CD8-positive, alpha-beta T cell (primary cell): ENCODE measurements at regions of chr14 and their contacts with region 1.

Region 1: DNA sequence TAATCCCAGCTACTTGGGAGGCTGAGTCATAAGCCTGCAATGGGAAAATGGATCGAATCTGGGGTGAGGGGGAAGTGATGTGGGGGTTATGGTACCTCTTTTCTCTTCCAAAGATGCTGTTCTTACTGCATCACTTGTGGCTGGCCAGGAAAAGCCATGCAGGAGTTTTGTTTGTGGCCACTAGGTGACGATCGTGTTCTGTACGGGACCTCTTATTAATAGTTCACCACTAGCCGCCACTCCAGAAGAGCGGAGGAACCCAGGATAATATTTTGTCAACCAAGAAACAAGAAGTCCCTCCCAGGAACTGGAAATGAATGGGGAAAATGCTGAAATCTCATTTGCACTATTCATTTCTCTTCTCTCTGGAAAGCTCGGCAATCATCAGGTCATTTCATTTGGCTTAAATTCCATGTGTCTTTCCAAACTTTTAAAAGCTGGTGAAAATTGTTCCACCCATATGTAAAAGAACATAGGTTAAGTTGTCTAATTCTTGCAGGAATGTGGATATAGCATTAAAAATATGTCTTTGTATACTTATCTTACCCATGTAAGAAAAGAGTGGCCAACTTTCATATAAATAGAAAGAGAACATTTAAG is 8.9 kb downstream of the GPR65 start:
- DNase-seq: peak in 6 of 9 experiments; percentile 35 to 72 (median 50)
- ATAC-seq: peak; percentile 78
- H3K4me3 ChIP-seq: no peak overlapping the region
- H3K4me3 Mint-ChIP-seq: peak overlapping the region; percentile 6
- H3K27ac ChIP-seq: no peak overlapping the region
- H3K27ac Mint-ChIP-seq: peak overlapping the region; percentile 80
- H3K4me1 ChIP-seq: peaks cover 50% of the 10 kb centered on the region
- H3K4me1 Mint-ChIP-seq: peaks cover 81% of the 10 kb centered on the region
- H3K27me3 ChIP-seq: no peaks in the 10 kb centered on the region
- H3K27me3 Mint-ChIP-seq: no peaks in the 10 kb centered on the region
- CTCF ChIP-seq: peak; percentile 51

Region 2: GRCh38 chr14:86216323-86216722 is 1797.5 kb before region 1 on chr14:
- CTCF ChIA-PET with region 1: no interaction called
- POLR2A ChIA-PET with region 1: no interaction called
- intact Hi-C with region 1: no loop called
- DNase-seq: no peak
- ATAC-seq: no peak
- H3K4me3 ChIP-seq: no peak overlapping the region
- H3K4me3 Mint-ChIP-seq: no peak overlapping the region
- H3K27ac ChIP-seq: no peak overlapping the region
- H3K27ac Mint-ChIP-seq: no peak overlapping the region
- H3K4me1 ChIP-seq: no peaks in the 10 kb centered on the region
- H3K4me1 Mint-ChIP-seq: no peaks in the 10 kb centered on the region
- H3K27me3 ChIP-seq: no peaks in the 10 kb centered on the region
- H3K27me3 Mint-ChIP-seq: no peaks in the 10 kb centered on the region
- CTCF ChIP-seq: no peak

Region 3: GRCh38 chr14:87952307-87953094 is 61.3 kb before region 1 on chr14:
- CTCF ChIA-PET with region 1: interaction called, 21 read pairs
- POLR2A ChIA-PET with region 1: no interaction called
- intact Hi-C with region 1: loop called in 1 of 2 experiments (anchors 5 kb)
- DNase-seq: peak in 2 of 9 experiments; percentile 40 to 63
- ATAC-seq: peak; percentile 54
- H3K4me3 ChIP-seq: peak overlapping the region in 1 of 2 experiments; percentile 9
- H3K4me3 Mint-ChIP-seq: peak overlapping the region; percentile 69
- H3K27ac ChIP-seq: peak overlapping the region; percentile 49 to 73
- H3K27ac Mint-ChIP-seq: peak overlapping the region; percentile 91
- H3K4me1 ChIP-seq: peaks cover 30% of the 10 kb centered on the region
- H3K4me1 Mint-ChIP-seq: peaks cover 54% of the 10 kb centered on the region
- H3K27me3 ChIP-seq: no peaks in the 10 kb centered on the region
- H3K27me3 Mint-ChIP-seq: no peaks in the 10 kb centered on the region
- CTCF ChIP-seq: no peak

Region 4: GRCh38 chr14:87979689-87980088 is 34.2 kb before region 1 on chr14:
- CTCF ChIA-PET with region 1: no interaction called
- POLR2A ChIA-PET with region 1: no interaction called
- intact Hi-C with region 1: no loop called
- DNase-seq: no peak
- ATAC-seq: no peak
- H3K4me3 ChIP-seq: no peak overlapping the region
- H3K4me3 Mint-ChIP-seq: no peak overlapping the region
- H3K27ac ChIP-seq: no peak overlapping the region
- H3K27ac Mint-ChIP-seq: no peak overlapping the region
- H3K4me1 ChIP-seq: no peaks in the 10 kb centered on the region
- H3K4me1 Mint-ChIP-seq: peaks cover 5% of the 10 kb centered on the region
- H3K27me3 ChIP-seq: no peaks in the 10 kb centered on the region
- H3K27me3 Mint-ChIP-seq: no peaks in the 10 kb centered on the region
- CTCF ChIP-seq: no peak

Region 5: DNA sequence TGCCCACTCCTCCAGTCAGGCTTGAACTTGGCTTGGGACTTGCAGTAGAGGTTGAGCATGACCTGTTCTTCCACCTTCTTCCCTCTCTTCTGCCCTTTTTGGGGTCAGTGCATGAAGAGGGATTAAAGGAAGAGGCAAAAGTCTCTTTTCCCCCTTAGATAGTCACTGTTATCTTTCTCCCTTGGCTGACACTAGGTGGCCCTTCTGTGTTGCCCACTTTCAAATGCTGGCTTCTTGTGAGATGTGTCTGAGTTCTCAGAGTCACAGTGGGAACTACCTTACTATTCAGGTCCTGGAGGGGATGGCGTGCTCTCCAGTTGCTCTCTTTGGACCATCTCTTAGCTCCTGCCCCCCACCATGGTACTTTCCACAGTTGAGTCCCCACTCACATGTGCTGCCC is 64.7 kb after region 1 on chr14:
- CTCF ChIA-PET with region 1: no interaction called
- POLR2A ChIA-PET with region 1: no interaction called
- intact Hi-C with region 1: no loop called
- DNase-seq: peak in 2 of 9 experiments; percentile 8 to 16
- ATAC-seq: no peak
- H3K4me3 ChIP-seq: no peak overlapping the region
- H3K4me3 Mint-ChIP-seq: no peak overlapping the region
- H3K27ac ChIP-seq: no peak overlapping the region
- H3K27ac Mint-ChIP-seq: no peak overlapping the region
- H3K4me1 ChIP-seq: no peaks in the 10 kb centered on the region
- H3K4me1 Mint-ChIP-seq: no peaks in the 10 kb centered on the region
- H3K27me3 ChIP-seq: no peaks in the 10 kb centered on the region
- H3K27me3 Mint-ChIP-seq: no peaks in the 10 kb centered on the region
- CTCF ChIP-seq: no peak

Region 6: DNA sequence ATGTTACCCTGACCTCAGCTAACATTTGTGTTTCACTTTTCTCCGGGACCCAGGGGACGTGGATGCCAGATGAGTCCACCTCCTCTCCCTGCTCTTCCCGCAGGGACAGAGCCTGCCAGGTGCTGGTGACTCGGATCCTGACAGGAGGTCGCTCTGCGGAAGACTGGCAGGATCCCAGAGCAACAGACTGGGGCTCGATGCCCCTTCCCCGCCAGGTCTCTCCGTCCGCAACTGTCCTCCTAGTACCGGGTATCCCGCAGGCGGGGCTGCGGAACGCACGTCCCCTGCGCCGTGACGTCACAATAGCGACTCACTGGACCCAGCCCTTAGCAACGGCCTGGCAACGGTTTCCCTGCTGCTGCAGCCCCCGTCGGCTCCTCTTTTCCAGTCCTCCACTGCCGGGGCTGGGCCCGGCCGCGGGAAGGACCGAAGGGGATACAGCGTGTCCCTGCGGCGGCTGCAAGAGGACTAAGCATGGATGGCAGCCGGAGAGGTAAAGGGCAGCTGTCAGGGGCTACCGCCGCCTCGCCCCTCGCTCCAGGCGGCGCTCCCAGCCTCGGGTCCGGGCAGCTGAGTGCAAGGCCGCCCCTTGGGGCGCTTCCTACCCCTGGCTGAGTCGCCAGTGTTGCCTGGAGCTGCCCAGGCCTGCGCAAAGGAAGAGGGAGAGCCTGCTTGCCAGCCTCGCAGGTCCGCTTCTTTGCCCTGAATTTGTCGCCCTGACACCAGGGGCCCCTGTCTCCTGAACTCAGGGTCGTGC is 371.7 kb after region 1 on chr14 and contains the start of gene SPATA7:
- CTCF ChIA-PET with region 1: no interaction called
- POLR2A ChIA-PET with region 1: no interaction called
- intact Hi-C with region 1: loop called in 1 of 2 experiments (anchors 10 kb)
- DNase-seq: peak; percentile 41 to 89 (median 79)
- ATAC-seq: peak; percentile 88
- H3K4me3 ChIP-seq: peak within 1 kb of the TSS; percentile 93 to 96
- H3K4me3 Mint-ChIP-seq: peak within 1 kb of the TSS; percentile 94
- H3K27ac ChIP-seq: peak within 1 kb of the TSS; percentile 72 to 77
- H3K27ac Mint-ChIP-seq: peak within 1 kb of the TSS; percentile 87
- H3K4me1 ChIP-seq: peaks cover 8% of the 10 kb centered on the region
- H3K4me1 Mint-ChIP-seq: peaks cover 19% of the 10 kb centered on the region
- H3K27me3 ChIP-seq: no peaks in the 10 kb centered on the region
- H3K27me3 Mint-ChIP-seq: no peaks in the 10 kb centered on the region
- CTCF ChIP-seq: no peak
- total RNA-seq, gene SPATA7: 1.9 to 3.2 TPM